ENCODE measurements at regions of chr20 and their contacts with region 1.

Region 1: DNA sequence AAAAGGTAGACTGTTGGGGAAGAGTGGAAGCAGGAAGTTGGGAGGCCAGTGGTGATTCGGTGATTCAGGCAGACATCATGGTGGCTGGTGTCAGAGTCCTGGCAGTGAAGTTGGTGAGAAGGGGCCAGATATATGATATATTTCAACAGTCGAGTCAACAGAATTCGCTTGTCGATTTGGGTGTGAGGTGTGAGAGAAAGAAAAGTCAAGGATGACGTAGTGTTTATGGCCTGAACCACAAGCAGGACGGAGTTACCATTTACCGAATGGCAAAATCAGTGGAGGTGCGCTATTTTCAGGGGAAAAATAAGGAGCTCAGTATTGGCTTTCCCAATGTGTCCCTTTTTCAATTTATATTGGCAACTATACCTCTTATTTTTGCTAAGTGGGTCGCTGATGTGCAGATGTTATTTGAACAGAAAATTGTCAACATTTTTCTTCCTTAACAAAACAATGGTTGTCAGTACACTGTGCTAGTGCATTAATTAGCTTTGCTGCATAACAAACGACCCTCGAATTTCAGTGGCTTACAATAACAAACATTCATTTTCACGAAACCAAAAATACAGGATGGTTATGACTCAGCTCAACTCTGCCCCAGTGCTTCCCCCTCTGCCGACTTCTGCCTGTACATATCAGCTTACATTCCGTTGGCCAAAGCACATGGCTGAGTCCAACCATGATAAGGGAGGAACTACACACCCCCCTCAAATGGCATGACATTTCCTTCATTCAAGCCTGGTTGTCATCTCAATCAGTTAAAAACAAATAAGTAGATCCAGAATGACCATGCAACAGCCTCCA is 255.0 kb upstream of the ZFP64 start:
- DNase-seq: no peak
- ATAC-seq: no peak
- H3K4me3 ChIP-seq: no peak overlapping the region
- H3K4me3 Mint-ChIP-seq: no peak overlapping the region
- H3K27ac ChIP-seq: no peak overlapping the region
- H3K27ac Mint-ChIP-seq: no peak overlapping the region
- H3K4me1 ChIP-seq: no peaks in the 10 kb centered on the region
- H3K4me1 Mint-ChIP-seq: peaks cover 0 to 3% (median 2%) of the 10 kb centered on the region in 3 donors
- H3K27me3 ChIP-seq: no peaks in the 10 kb centered on the region
- H3K27me3 Mint-ChIP-seq: no peaks in the 10 kb centered on the region

Region 2: GRCh38 chr20:52459150-52459549 is 12.5 kb after region 1 on chr20:
- CTCF ChIA-PET with region 1: interaction called in 1 of 2 experiments, 3 read pairs
- POLR2A ChIA-PET with region 1: interaction called in 1 of 2 experiments, 10 read pairs
- DNase-seq: no peak
- ATAC-seq: no peak
- H3K4me3 ChIP-seq: no peak overlapping the region
- H3K4me3 Mint-ChIP-seq: no peak overlapping the region
- H3K27ac ChIP-seq: no peak overlapping the region
- H3K27ac Mint-ChIP-seq: no peak overlapping the region
- H3K4me1 ChIP-seq: no peaks in the 10 kb centered on the region
- H3K4me1 Mint-ChIP-seq: peaks cover 0 to 6% (median 0%) of the 10 kb centered on the region in 3 donors
- H3K27me3 ChIP-seq: no peaks in the 10 kb centered on the region
- H3K27me3 Mint-ChIP-seq: peaks cover 6 to 10% of the 10 kb centered on the region in 2 donors

Region 3: DNA sequence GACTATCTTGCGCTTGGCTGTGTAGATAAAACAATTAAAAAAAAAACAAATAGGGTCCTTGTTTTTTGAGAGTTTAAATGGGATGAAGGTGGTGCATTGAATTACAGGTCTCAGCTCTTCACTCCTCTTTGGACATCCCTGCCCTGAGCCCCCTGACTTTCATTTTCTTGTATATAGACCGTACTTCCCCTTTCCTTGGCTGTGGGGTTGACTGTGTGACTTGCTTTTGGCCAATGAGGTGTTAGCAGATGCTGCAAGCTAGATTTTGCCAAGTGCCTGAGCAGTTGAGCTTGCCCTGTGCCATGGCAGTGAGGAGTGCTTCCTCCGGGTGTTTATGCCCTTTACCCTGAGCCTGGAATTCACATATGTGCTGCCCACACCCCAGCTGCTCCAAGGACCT is 131.1 kb after region 1 on chr20:
- CTCF ChIA-PET with region 1: no interaction called
- POLR2A ChIA-PET with region 1: interaction called in 1 of 2 experiments, 11 read pairs
- DNase-seq: no peak
- ATAC-seq: no peak
- H3K4me3 ChIP-seq: no peak overlapping the region
- H3K4me3 Mint-ChIP-seq: no peak overlapping the region
- H3K27ac ChIP-seq: no peak overlapping the region
- H3K27ac Mint-ChIP-seq: no peak overlapping the region
- H3K4me1 ChIP-seq: no peaks in the 10 kb centered on the region
- H3K4me1 Mint-ChIP-seq: no peaks in the 10 kb centered on the region
- H3K27me3 ChIP-seq: no peaks in the 10 kb centered on the region
- H3K27me3 Mint-ChIP-seq: peaks cover 0 to 4% of the 10 kb centered on the region in 2 donors